Sigmoid colon (tissue), 7 donors: ENCODE measurements at regions of chr4 and their contacts with region 1.

Region 1: GRCh38 chr4:87465739-87466366 is 43.5 kb downstream of the NUDT9 start:
- DNase-seq: no peak
- H3K4me3 ChIP-seq: no peak overlapping the region
- H3K27ac ChIP-seq: no peak overlapping the region
- H3K4me1 ChIP-seq: peaks cover 0 to 7% (median 0%) of the 10 kb centered on the region in 4 donors
- H3K27me3 ChIP-seq: no peaks in the 10 kb centered on the region
- CTCF ChIP-seq: peak in 3 of 4 experiments; percentile 42 to 63 (median 62)
- EP300 ChIP-seq: no peak
- POLR2A ChIP-seq: no peak

Region 2: DNA sequence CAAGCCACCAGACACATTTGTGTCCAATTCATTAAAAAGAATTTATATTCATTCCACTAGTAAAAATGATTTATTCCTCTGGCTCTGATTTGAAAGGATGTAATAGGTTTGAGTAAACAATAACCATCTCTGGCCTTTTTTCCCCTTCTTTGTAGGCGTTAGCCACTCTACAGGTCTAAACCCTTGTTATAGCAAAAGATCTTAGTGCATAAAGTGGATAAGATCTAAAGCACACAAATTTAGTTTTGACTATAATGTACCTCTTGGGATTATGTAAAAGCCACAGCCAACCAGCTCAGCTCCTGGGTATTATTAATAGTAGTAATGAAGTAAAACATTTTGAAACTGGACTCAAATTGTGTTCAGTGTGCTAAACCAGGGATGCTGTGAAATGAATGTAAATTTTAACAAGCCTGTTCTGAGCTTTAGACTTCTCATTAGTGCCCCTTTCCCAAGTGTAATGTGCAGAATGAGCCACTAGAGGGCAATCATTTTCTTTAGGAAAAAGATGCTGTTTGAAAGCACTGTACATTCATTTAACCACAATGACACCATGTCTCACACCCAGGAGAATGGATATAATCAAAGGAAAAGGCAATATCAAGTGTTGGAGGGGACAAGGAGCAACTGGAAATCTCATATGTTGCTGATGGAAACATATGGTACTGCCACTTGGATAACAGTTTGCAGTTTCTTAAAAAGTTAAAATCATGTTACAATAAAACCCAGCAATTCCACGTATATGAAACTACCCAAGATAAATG is 315.2 kb before region 1 on chr4:
- intact Hi-C with region 1: loop called (anchors 10 kb)
- DNase-seq: no peak
- H3K4me3 ChIP-seq: no peak overlapping the region
- H3K27ac ChIP-seq: peak overlapping the region in 3 of 4 donors; percentile 53 to 70 (median 63)
- H3K4me1 ChIP-seq: peaks cover 0 to 35% (median 22%) of the 10 kb centered on the region in 4 donors
- H3K27me3 ChIP-seq: no peaks in the 10 kb centered on the region
- CTCF ChIP-seq: peak; percentile 70 to 91 (median 86)
- EP300 ChIP-seq: no peak
- POLR2A ChIP-seq: no peak

Region 3: GRCh38 chr4:87270144-87270543 is 195.7 kb before region 1 on chr4:
- intact Hi-C with region 1: loop called (anchors 10 kb)
- DNase-seq: no peak
- H3K4me3 ChIP-seq: no peak overlapping the region
- H3K27ac ChIP-seq: no peak overlapping the region
- H3K4me1 ChIP-seq: no peaks in the 10 kb centered on the region
- H3K27me3 ChIP-seq: no peaks in the 10 kb centered on the region
- CTCF ChIP-seq: peak in 1 of 4 experiments; percentile 37
- EP300 ChIP-seq: no peak
- POLR2A ChIP-seq: no peak

Region 4: DNA sequence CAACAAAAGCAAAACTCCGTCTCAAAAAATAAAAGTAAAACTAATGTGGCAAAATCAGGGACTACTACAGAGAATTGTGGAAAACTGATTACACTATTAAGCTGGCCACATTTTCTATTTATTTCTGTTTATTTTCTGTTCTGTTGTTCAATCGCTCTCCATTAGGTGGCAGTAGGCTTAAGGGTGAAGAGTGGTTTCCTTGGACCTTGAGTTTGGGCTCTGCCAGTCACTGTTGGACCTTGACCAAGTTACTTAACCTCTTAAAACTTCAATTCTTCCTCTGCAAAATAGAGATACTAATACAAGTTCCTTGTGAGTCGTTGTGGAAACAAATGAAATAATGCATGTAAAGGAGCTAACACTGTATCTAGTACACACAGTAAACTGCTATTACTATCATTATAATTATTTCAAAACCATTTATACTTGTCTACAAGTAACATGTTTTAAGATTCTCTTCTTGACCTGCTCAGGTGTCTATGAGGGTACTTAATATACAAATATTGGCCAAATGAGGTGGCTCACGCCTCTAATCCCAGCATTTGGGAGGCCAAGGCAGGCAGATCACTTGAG is 90.0 kb before region 1 on chr4:
- intact Hi-C with region 1: loop called (anchors 1 kb)
- DNase-seq: peak; percentile 76
- H3K4me3 ChIP-seq: no peak overlapping the region
- H3K27ac ChIP-seq: peak overlapping the region in 2 of 4 donors; percentile 8 to 58
- H3K4me1 ChIP-seq: peaks cover 0 to 8% (median 5%) of the 10 kb centered on the region in 4 donors
- H3K27me3 ChIP-seq: no peaks in the 10 kb centered on the region
- CTCF ChIP-seq: peak; percentile 67 to 79 (median 75)
- EP300 ChIP-seq: no peak
- POLR2A ChIP-seq: no peak

Region 5: DNA sequence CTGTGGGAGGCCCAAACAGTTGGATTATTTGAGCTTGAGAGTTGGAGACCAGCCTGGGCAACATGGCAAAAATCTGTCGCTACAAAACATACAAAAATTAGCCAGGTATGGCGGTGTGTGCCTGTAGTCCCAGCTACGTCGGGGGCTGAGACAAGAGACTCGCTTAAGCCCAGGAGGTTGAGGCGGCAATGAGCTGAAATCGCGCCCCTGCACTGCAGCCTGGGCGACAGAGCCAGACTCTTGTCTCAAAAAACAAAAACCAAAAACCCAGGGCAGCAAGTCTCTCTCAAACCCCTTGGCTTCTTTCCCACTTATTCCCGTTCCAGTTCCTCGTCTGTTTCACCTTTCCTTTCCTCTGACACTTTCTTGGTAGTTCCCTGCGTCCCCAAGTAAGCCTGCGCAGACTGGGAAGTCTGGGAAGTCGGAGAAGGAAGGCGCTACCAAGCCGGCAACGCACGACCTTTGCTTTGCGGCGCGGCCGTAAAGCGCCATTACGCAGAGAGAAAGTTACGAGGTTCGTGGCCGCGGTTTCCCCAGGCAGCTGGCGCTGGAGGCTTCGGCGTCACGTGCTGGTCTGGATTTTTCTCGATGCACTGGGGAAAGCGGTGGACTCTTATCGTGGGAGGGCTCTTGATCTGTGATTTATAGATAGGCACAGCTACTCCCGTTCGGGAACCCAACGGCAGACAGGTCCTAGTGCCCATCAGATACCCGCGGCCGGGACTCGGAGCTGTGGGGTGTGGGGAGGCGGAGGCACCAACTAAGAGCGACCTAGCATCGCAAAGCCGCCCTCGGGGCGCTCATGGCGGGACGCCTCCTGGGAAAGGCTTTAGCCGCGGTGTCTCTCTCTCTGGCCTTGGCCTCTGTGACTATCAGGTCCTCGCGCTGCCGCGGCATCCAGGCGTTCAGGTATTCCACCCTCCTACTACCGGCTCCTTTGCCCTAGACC is 43.5 kb before region 1 on chr4 and contains the start of gene NUDT9:
- intact Hi-C with region 1: loop called (anchors 5 kb)
- DNase-seq: peak; percentile 97
- H3K4me3 ChIP-seq: peak within 1 kb of the TSS; percentile 67 to 91 (median 74)
- H3K27ac ChIP-seq: peak within 1 kb of the TSS; percentile 85 to 95 (median 91)
- H3K4me1 ChIP-seq: peaks cover 0 to 31% (median 27%) of the 10 kb centered on the region in 4 donors
- H3K27me3 ChIP-seq: no peaks in the 10 kb centered on the region
- CTCF ChIP-seq: no peak
- EP300 ChIP-seq: peak in 1 of 4 donors; percentile 82
- POLR2A ChIP-seq: peak; percentile 83 to 86
- total RNA-seq, gene NUDT9: 12.4 to 25.2 (median 22.7) TPM

Region 6: GRCh38 chr4:87433342-87433741 is 32.5 kb before region 1 on chr4:
- intact Hi-C with region 1: no loop called
- DNase-seq: no peak
- H3K4me3 ChIP-seq: no peak overlapping the region
- H3K27ac ChIP-seq: no peak overlapping the region
- H3K4me1 ChIP-seq: peaks cover 0 to 2% (median 0%) of the 10 kb centered on the region in 4 donors
- H3K27me3 ChIP-seq: no peaks in the 10 kb centered on the region
- CTCF ChIP-seq: no peak
- EP300 ChIP-seq: no peak
- POLR2A ChIP-seq: no peak

Region 7: GRCh38 chr4:87838890-87839591 is 373.2 kb after region 1 on chr4:
- intact Hi-C with region 1: loop called (anchors 10 kb)
- DNase-seq: peak; percentile 69
- H3K4me3 ChIP-seq: no peak overlapping the region
- H3K27ac ChIP-seq: peak overlapping the region in 1 of 4 donors; percentile 13
- H3K4me1 ChIP-seq: peaks cover 0 to 12% (median 5%) of the 10 kb centered on the region in 4 donors
- H3K27me3 ChIP-seq: no peaks in the 10 kb centered on the region
- CTCF ChIP-seq: peak in 3 of 4 experiments; percentile 54 to 76 (median 61)
- EP300 ChIP-seq: no peak
- POLR2A ChIP-seq: no peak